ENCODE measurements at regions of chr12 and their contacts with region 1.

Region 1: DNA sequence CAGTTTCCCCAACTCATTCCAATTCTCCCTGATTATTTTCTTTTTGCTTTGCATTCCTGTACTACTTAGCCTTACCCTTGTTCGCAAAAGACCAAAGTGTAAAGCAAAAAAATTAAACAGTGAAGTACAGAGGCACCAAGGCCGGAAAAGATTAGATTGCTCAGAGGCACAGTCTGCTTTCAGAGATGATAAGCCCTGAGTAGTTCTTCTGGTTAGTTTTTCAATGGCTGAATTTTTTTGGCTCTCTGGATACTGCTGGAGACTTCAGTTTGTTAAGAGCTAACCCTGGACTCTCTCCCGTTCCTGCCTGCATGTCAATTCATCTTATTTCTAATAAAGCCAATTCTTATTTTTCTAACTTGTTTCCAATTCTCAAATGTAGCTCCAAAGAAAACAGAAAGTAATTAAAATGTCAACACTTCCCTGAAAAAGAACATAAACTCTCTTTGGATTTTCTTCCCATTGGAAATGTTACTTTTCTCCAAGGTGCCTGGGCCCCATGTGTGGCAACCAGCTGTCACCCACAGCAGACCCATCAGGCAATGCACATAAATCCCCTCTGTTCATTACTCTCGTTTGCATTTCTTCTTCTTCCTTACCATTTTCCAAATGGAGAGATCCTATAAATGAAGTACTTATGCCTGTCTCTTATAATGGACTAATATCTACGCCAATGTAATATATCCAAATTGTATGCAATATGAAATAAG is 142.8 kb downstream of the BTG1 start:
- DNase-seq: peak in 1 of 2 experiments; percentile 34
- H3K4me3 ChIP-seq: no peak overlapping the region
- H3K4me3 Mint-ChIP-seq: peak overlapping the region; percentile 64
- H3K27ac Mint-ChIP-seq: peak overlapping the region; percentile 69
- H3K4me1 ChIP-seq: peaks cover 22% of the 10 kb centered on the region
- H3K4me1 Mint-ChIP-seq: peaks cover 24% of the 10 kb centered on the region
- H3K27me3 ChIP-seq: no peaks in the 10 kb centered on the region
- H3K27me3 Mint-ChIP-seq: no peaks in the 10 kb centered on the region
- CTCF ChIP-seq: no peak

Region 2: DNA sequence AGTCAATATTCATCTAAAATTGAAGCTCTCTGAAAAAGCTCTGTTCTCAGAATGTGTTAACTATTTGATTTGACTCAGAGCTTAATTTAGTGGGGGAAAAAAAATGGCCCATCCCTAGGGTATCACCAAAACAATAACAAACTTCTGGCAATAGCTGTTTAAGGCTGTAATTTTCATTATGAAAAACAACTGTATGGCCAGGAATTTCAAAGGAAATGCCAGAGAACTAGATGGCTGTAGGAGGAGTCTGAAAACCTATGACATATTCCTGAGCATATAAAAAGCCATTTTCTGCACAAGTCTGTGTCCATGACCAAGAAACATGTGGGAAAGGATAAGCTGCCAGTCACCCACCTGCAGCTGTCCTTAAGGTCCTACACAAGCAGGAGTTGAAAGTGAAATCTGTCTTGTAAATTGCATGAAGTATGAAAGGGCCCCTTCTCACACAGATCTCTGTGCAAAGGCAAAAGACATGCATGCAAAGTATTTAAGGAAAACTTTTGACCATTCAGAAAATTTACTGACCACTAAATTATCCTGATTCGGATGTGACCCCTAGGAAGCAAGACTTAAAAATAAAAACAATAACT is 156.3 kb before region 1 on chr12:
- CTCF ChIA-PET with region 1: no interaction called
- POLR2A ChIA-PET with region 1: no interaction called
- intact Hi-C with region 1: no loop called
- DNase-seq: no peak
- H3K4me3 ChIP-seq: no peak overlapping the region
- H3K4me3 Mint-ChIP-seq: no peak overlapping the region
- H3K27ac Mint-ChIP-seq: no peak overlapping the region
- H3K4me1 ChIP-seq: no peaks in the 10 kb centered on the region
- H3K4me1 Mint-ChIP-seq: no peaks in the 10 kb centered on the region
- H3K27me3 ChIP-seq: no peaks in the 10 kb centered on the region
- H3K27me3 Mint-ChIP-seq: peaks cover 2% of the 10 kb centered on the region
- CTCF ChIP-seq: no peak

Region 3: DNA sequence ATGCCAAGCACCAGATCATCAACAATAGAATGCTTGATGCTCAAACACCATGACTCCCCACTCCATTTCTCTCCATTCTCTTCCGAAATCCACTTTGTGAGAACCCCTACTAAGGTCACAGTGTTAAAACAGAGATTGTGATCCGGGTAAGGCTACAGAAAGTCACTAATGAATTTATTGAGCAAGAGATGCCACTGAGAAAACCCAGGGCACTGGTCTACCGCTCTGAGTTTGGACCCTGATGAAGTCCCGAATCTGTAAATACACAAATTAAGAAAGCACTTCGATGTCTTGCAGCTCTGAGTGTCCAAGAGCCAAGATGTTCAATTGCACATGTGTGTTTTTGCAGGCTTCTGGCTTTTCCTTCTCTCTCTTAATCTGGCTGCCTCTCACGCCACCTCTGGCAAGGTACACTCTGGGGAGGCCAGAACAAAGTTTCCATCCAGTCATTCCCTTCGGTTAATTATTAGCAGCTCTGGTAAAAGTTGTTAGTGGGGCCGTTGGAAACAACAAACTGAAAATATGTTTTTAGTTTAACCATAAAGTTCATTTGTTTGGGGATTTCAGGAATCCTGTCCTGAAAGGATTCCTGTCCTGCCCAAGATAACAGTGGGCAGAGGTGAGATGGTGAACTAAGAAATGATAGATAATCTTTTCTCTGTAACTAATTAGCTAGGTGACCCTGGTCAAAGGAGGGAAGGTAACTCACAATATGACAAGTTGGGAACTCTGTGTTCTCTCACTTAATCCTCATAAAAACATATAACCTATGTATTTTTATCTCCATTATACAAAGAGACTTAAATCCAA is 67.4 kb after region 1 on chr12:
- CTCF ChIA-PET with region 1: no interaction called
- POLR2A ChIA-PET with region 1: no interaction called
- intact Hi-C with region 1: loop called (anchors 1 kb)
- DNase-seq: peak; percentile 76 to 83
- H3K4me3 ChIP-seq: peak overlapping the region; percentile 9; the same call in 1 of the 2 replicates
- H3K4me3 Mint-ChIP-seq: peak overlapping the region; percentile 63
- H3K27ac Mint-ChIP-seq: peak overlapping the region; percentile 86
- H3K4me1 ChIP-seq: peaks cover 40% of the 10 kb centered on the region
- H3K4me1 Mint-ChIP-seq: peaks cover 20% of the 10 kb centered on the region
- H3K27me3 ChIP-seq: no peaks in the 10 kb centered on the region
- H3K27me3 Mint-ChIP-seq: no peaks in the 10 kb centered on the region
- CTCF ChIP-seq: peak in 1 of 2 experiments; percentile 38

Region 4: GRCh38 chr12:92162079-92162478 is 159.3 kb after region 1 on chr12:
- CTCF ChIA-PET with region 1: no interaction called
- POLR2A ChIA-PET with region 1: no interaction called
- intact Hi-C with region 1: no loop called
- DNase-seq: no peak
- H3K4me3 ChIP-seq: no peak overlapping the region
- H3K4me3 Mint-ChIP-seq: no peak overlapping the region
- H3K27ac Mint-ChIP-seq: peak overlapping the region; percentile 85
- H3K4me1 ChIP-seq: peaks cover 36% of the 10 kb centered on the region
- H3K4me1 Mint-ChIP-seq: peaks cover 23% of the 10 kb centered on the region
- H3K27me3 ChIP-seq: no peaks in the 10 kb centered on the region
- H3K27me3 Mint-ChIP-seq: no peaks in the 10 kb centered on the region
- CTCF ChIP-seq: no peak

Region 5: GRCh38 chr12:92341065-92341668 is 338.3 kb after region 1 on chr12:
- CTCF ChIA-PET with region 1: no interaction called
- POLR2A ChIA-PET with region 1: no interaction called
- intact Hi-C with region 1: no loop called
- DNase-seq: no peak
- H3K4me3 ChIP-seq: no peak overlapping the region
- H3K4me3 Mint-ChIP-seq: peak overlapping the region; percentile 2
- H3K27ac Mint-ChIP-seq: no peak overlapping the region
- H3K4me1 ChIP-seq: no peaks in the 10 kb centered on the region
- H3K4me1 Mint-ChIP-seq: peaks cover 6% of the 10 kb centered on the region
- H3K27me3 ChIP-seq: no peaks in the 10 kb centered on the region
- H3K27me3 Mint-ChIP-seq: no peaks in the 10 kb centered on the region
- CTCF ChIP-seq: no peak

Region 6: GRCh38 chr12:92408072-92408900 is 405.5 kb after region 1 on chr12:
- CTCF ChIA-PET with region 1: no interaction called
- POLR2A ChIA-PET with region 1: no interaction called
- intact Hi-C with region 1: loop called (anchors 10 kb)
- DNase-seq: peak; percentile 52 to 59
- H3K4me3 ChIP-seq: no peak overlapping the region
- H3K4me3 Mint-ChIP-seq: no peak overlapping the region
- H3K27ac Mint-ChIP-seq: no peak overlapping the region
- H3K4me1 ChIP-seq: no peaks in the 10 kb centered on the region
- H3K4me1 Mint-ChIP-seq: no peaks in the 10 kb centered on the region
- H3K27me3 ChIP-seq: no peaks in the 10 kb centered on the region
- H3K27me3 Mint-ChIP-seq: no peaks in the 10 kb centered on the region
- CTCF ChIP-seq: peak; percentile 61 to 64